ENCODE measurements at regions of chr20 and their contacts with region 1.

Region 1: GRCh38 chr20:54668271-54669039 is 193.1 kb downstream of the DOK5 start:
- H3K4me3 ChIP-seq: no peak overlapping the region
- H3K27ac ChIP-seq: no peak overlapping the region
- H3K4me1 ChIP-seq: no peaks in the 10 kb centered on the region
- CTCF ChIP-seq: no peak

Region 2: DNA sequence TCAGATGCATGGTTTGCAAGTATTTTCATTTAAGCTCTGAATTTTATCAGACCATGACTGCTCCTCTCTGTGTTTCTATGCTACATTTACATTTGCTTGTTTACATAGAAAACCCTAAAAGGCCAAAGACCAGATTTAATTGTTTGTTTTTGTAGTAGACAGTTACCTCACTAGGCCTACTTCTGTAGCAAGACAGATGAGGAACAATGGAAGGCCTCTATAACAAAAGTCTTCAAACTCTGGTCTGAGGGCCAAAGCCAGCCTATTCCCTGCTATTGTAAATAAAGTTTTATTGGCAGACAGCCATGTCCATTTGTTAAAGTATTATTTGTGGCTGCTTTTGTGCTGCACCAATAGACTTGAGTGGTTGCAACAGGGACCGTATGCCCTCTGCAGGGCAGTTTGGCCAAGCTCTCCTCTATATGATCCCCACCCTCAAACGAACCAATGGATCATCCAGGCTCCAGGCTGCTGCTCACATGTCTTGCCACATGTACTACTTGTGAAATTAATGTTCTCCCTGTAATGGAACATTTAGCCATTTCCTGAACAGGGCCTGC is 11.1 kb before region 1 on chr20:
- CTCF ChIA-PET with region 1: interaction called, 12 read pairs
- POLR2A ChIA-PET with region 1: no interaction called
- H3K4me3 ChIP-seq: no peak overlapping the region
- H3K27ac ChIP-seq: no peak overlapping the region
- H3K4me1 ChIP-seq: no peaks in the 10 kb centered on the region
- CTCF ChIP-seq: no peak

Region 3: DNA sequence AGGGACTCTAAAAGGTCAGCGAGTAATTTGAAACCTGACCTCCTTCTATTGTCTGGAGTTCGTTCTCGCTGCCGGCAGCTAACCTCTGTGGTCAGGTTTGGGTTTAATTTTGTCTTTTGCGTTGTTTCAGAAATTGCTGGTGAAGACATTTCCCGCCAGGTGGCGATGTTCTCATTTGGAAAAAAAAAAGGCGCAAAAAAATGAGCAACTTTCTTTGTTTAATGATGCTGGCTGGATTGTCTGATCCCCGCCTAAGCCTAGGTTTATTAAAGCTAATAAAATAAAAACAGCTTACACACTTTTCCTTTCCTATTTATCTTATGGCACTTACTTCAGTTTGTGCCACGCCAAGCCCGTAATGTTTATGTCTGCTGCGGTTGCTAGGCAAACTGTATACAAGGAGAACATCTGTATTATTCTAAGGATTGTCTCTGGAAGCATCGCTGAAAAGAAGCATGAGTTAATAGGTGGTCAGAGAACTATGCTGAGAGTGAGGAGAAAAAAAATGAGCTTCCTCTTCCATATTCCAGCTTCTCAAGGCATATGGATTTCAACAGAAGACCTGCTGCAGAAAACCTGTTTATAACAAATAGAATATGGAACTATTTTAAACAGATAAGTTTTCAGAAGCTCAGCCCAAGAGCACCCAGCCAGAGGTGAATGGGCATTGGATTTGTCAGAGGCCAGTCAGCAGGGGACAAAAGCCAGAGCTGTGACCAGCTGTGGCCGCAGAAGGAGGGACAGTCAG is 12.6 kb after region 1 on chr20:
- CTCF ChIA-PET with region 1: interaction called, 14 read pairs
- POLR2A ChIA-PET with region 1: no interaction called
- H3K4me3 ChIP-seq: no peak overlapping the region
- H3K27ac ChIP-seq: no peak overlapping the region
- H3K4me1 ChIP-seq: no peaks in the 10 kb centered on the region
- CTCF ChIP-seq: 0 out of 2 replicates have a peak, but pooled peaks have one; percentile 12

Measured in HEK293 (cell line).